ENCODE measurements at regions of chr11 and their contacts with region 1.

Region 1: DNA sequence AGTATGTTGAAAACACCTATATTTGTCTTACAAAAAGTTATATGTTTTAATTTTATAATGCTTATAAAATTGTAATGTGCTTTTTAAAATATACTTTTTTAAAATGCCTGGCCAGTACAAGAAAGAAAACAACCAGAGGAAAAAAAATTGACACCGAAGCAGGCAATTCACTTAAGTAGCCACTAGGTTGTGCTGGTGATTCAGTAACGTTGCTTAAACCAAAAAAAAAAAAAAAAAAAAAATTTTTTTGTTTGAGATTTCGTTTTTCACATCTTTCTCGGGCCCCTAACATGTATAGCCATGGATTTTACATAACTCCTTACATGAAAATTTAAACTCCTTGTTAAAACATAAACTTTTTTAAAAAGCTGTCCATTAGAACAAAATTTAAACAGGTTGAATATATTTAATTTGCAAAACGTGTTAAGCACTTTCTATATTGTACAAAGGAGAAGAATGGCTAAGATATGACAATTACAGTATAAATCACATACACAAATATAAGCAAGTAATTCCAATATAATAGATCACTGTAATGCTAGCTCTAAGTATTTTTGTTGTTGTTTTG is 9.2 kb downstream of the OR8B4 start:
- DNase-seq: peak; percentile 41
- H3K4me3 ChIP-seq: no peak overlapping the region
- H3K27ac ChIP-seq: no peak overlapping the region
- H3K27me3 ChIP-seq: peaks cover 9% of the 10 kb centered on the region
- CTCF ChIP-seq: peak; percentile 81

Region 2: DNA sequence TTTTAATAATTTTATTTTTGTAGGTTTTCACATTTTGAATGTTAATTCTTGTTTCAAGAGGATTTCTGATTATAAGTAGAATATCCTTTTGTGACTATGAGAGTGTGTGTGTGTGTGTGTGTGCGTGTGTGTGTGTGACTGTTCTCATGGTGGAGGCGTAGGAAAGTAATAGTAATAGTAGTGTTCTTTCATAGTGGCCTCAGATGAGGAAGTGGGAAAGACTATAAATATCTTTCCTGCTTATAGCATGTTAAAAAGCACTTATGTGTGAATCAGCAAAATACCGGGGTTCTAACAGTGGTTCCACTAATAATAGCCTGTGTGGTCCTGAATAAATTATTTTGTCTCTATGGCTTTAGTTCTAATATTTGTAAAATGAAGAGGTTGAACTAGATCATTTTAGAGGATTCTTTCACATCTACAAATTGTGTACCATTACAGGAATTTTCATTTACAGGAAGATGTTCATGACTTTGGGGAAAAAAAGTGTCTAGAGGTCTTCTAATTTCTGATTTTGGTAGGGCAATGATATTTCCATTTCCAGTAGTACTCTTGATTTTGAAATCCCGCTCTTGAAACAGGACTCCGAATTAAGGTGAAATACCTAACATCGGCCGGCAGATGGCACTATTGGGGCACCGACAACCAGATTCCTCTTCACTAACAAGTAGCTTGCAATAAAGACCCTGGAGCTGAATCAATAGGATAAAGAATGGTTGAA is 344.4 kb before region 1 on chr11:
- CTCF ChIA-PET with region 1: interaction called, 30 read pairs
- POLR2A ChIA-PET with region 1: no interaction called
- DNase-seq: peak; percentile 67
- H3K4me3 ChIP-seq: no peak overlapping the region
- H3K27ac ChIP-seq: no peak overlapping the region
- H3K27me3 ChIP-seq: peaks cover 3% of the 10 kb centered on the region
- CTCF ChIP-seq: peak; percentile 78

Region 3: DNA sequence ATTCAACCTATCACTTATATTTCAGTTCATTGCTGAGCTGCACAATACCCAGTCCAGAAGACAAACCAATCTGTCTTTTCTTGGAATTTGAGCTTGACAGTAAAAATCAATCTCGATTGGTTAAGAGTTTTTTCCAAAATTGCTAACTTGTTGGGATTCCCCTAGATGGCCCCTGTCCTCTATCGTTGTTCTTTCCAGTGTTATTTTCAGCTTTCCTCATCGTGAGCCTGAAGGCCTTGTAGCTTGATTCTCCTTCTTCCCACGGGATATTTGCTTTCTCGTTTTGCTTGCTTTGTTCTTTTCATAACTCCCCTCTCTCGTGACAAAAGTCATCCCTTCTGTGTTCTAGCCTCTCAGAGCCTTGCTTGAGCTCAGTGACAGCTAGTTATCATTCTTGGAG is 27.0 kb after region 1 on chr11:
- CTCF ChIA-PET with region 1: interaction called, 12 read pairs
- POLR2A ChIA-PET with region 1: no interaction called
- DNase-seq: no peak
- H3K4me3 ChIP-seq: no peak overlapping the region
- H3K27ac ChIP-seq: no peak overlapping the region
- H3K27me3 ChIP-seq: peaks cover 2% of the 10 kb centered on the region
- CTCF ChIP-seq: no peak

Region 4: GRCh38 chr11:124586238-124586860 is 170.9 kb after region 1 on chr11:
- CTCF ChIA-PET with region 1: interaction called, 117 read pairs
- POLR2A ChIA-PET with region 1: no interaction called
- DNase-seq: peak; percentile 23
- H3K4me3 ChIP-seq: no peak overlapping the region
- H3K27ac ChIP-seq: no peak overlapping the region
- H3K27me3 ChIP-seq: peaks cover 10% of the 10 kb centered on the region
- CTCF ChIP-seq: peak; percentile 74

Region 5: GRCh38 chr11:124778281-124778680 is 362.8 kb after region 1 on chr11:
- CTCF ChIA-PET with region 1: interaction called, 10 read pairs
- POLR2A ChIA-PET with region 1: no interaction called
- DNase-seq: no peak
- H3K4me3 ChIP-seq: no peak overlapping the region
- H3K27ac ChIP-seq: no peak overlapping the region
- H3K27me3 ChIP-seq: no peaks in the 10 kb centered on the region
- CTCF ChIP-seq: peak; percentile 22; the same call in 1 of the 2 replicates

Region 6: GRCh38 chr11:124865921-124866583 is 450.6 kb after region 1 on chr11:
- CTCF ChIA-PET with region 1: interaction called, 11 read pairs
- POLR2A ChIA-PET with region 1: no interaction called
- DNase-seq: no peak
- H3K4me3 ChIP-seq: peak overlapping the region; percentile 31
- H3K27ac ChIP-seq: no peak overlapping the region
- H3K27me3 ChIP-seq: peaks cover 97% of the 10 kb centered on the region
- CTCF ChIP-seq: peak; percentile 73

Measured in AG04450 (cell line).